Naive thymus-derived CD4-positive, alpha-beta T cell (primary cell): ENCODE measurements at regions of chr1 and their contacts with region 1.

Region 1: GRCh38 chr1:15046487-15047165 is 106.9 kb upstream of the TMEM51 start:
- DNase-seq: peak in 7 of 9 donors; percentile 17 to 60 (median 38)
- ATAC-seq: peak; percentile 51
- H3K4me3 ChIP-seq: no peak overlapping the region
- H3K4me3 Mint-ChIP-seq: no peak overlapping the region
- H3K27ac ChIP-seq: no peak overlapping the region
- H3K27ac Mint-ChIP-seq: no peak overlapping the region
- H3K4me1 ChIP-seq: no peaks in the 10 kb centered on the region
- H3K4me1 Mint-ChIP-seq: no peaks in the 10 kb centered on the region
- H3K27me3 ChIP-seq: no peaks in the 10 kb centered on the region
- H3K27me3 Mint-ChIP-seq: no peaks in the 10 kb centered on the region

Region 2: DNA sequence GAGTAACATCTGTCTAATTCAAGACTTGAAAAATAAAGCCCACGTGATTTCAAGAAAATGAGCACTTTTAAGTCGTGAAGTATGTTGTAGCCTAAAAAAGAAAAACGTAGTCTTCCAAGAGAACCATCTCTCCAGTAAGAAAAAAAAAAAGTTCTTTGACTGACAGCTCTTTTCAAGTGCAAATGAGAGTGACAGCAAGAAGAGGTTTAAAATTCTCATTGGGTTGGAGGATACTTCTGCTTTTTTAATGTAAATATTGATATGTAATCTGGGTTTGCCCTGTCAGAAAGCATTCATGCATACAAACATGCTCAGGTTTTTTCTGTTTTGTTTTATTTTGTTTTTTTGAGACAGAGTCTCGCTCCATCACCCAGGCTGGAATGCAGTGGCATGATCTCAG is 1378.9 kb before region 1 on chr1:
- CTCF ChIA-PET with region 1: no interaction called
- POLR2A ChIA-PET with region 1: no interaction called
- intact Hi-C with region 1: loop called in 1 of 2 experiments (anchors 5 kb)
- DNase-seq: no peak
- ATAC-seq: no peak
- H3K4me3 ChIP-seq: no peak overlapping the region
- H3K4me3 Mint-ChIP-seq: no peak overlapping the region
- H3K27ac ChIP-seq: no peak overlapping the region
- H3K27ac Mint-ChIP-seq: no peak overlapping the region
- H3K4me1 ChIP-seq: no peaks in the 10 kb centered on the region
- H3K4me1 Mint-ChIP-seq: peaks cover 0 to 8% (median 0%) of the 10 kb centered on the region in 7 donors
- H3K27me3 ChIP-seq: no peaks in the 10 kb centered on the region
- H3K27me3 Mint-ChIP-seq: peaks cover 0 to 8% (median 0%) of the 10 kb centered on the region in 5 donors

Region 3: GRCh38 chr1:14094611-14095400 is 951.8 kb before region 1 on chr1:
- CTCF ChIA-PET with region 1: no interaction called
- POLR2A ChIA-PET with region 1: no interaction called
- intact Hi-C with region 1: loop called in 1 of 2 experiments (anchors 5 kb)
- DNase-seq: peak in 1 of 9 donors; percentile 15
- ATAC-seq: no peak
- H3K4me3 ChIP-seq: no peak overlapping the region
- H3K4me3 Mint-ChIP-seq: no peak overlapping the region
- H3K27ac ChIP-seq: no peak overlapping the region
- H3K27ac Mint-ChIP-seq: no peak overlapping the region
- H3K4me1 ChIP-seq: no peaks in the 10 kb centered on the region
- H3K4me1 Mint-ChIP-seq: no peaks in the 10 kb centered on the region
- H3K27me3 ChIP-seq: no peaks in the 10 kb centered on the region
- H3K27me3 Mint-ChIP-seq: peaks cover 0 to 48% (median 31%) of the 10 kb centered on the region in 5 donors

Region 4: GRCh38 chr1:14778898-14779865 is 267.4 kb before region 1 on chr1:
- CTCF ChIA-PET with region 1: interaction called, 3 read pairs
- POLR2A ChIA-PET with region 1: no interaction called
- intact Hi-C with region 1: loop called in 1 of 2 experiments (anchors 5 kb)
- DNase-seq: peak in 3 of 9 donors; percentile 9 to 24 (median 10)
- ATAC-seq: no peak
- H3K4me3 ChIP-seq: no peak overlapping the region
- H3K4me3 Mint-ChIP-seq: no peak overlapping the region
- H3K27ac ChIP-seq: no peak overlapping the region
- H3K27ac Mint-ChIP-seq: no peak overlapping the region
- H3K4me1 ChIP-seq: no peaks in the 10 kb centered on the region
- H3K4me1 Mint-ChIP-seq: peaks cover 0 to 13% (median 0%) of the 10 kb centered on the region in 7 donors
- H3K27me3 ChIP-seq: no peaks in the 10 kb centered on the region
- H3K27me3 Mint-ChIP-seq: peaks cover 0 to 15% (median 4%) of the 10 kb centered on the region in 5 donors

Region 5: DNA sequence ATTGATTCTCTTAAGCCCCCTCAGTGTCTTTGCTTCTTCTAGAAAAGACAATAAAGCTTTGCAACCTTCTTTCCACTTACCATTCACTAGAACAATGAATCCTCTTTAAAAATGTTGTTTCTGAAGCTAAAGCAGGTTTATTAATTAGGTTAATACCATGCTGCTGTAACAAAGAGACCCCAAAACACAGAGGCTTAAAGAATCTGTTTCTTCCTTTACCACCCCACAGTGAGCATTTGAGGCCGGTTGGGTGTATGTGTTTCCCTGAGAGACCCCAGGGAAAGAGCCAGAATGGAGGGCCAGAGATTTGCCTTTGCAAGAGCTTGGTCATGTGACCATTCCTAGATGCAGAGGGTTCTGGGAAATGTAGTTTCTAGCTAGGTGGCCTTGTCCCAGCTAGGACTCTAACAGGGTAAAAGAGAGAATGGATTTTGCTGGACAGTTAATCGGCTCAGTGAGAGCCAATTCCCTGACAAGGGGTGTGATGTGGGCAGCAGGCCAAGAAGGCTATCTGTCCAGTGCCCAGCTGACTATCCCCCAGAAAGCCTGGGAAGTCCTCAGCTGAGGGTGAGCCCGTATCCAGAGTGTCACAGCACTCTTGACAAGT is 84.9 kb before region 1 on chr1:
- CTCF ChIA-PET with region 1: no interaction called
- POLR2A ChIA-PET with region 1: no interaction called
- intact Hi-C with region 1: no loop called
- DNase-seq: no peak
- ATAC-seq: no peak
- H3K4me3 ChIP-seq: no peak overlapping the region
- H3K4me3 Mint-ChIP-seq: no peak overlapping the region
- H3K27ac ChIP-seq: no peak overlapping the region
- H3K27ac Mint-ChIP-seq: no peak overlapping the region
- H3K4me1 ChIP-seq: no peaks in the 10 kb centered on the region
- H3K4me1 Mint-ChIP-seq: peaks cover 0 to 2% (median 0%) of the 10 kb centered on the region in 7 donors
- H3K27me3 ChIP-seq: no peaks in the 10 kb centered on the region
- H3K27me3 Mint-ChIP-seq: no peaks in the 10 kb centered on the region